ENCODE measurements at regions of chr7 and their contacts with region 1.

Region 1: GRCh38 chr7:41940760-41941343 is 238.0 kb upstream of the INHBA start:
- DNase-seq: peak; percentile 79
- H3K4me3 Mint-ChIP-seq: no peak overlapping the region
- H3K27ac Mint-ChIP-seq: no peak overlapping the region
- H3K4me1 Mint-ChIP-seq: peaks cover 16% of the 10 kb centered on the region
- H3K27me3 Mint-ChIP-seq: peaks cover 91% of the 10 kb centered on the region
- CTCF ChIP-seq: peak; percentile 94

Region 2: GRCh38 chr7:40232242-40232893 is 1708.5 kb before region 1 on chr7:
- CTCF ChIA-PET with region 1: no interaction called
- intact Hi-C with region 1: loop called (anchors 10 kb)
- DNase-seq: peak; percentile 57
- H3K4me3 Mint-ChIP-seq: no peak overlapping the region
- H3K27ac Mint-ChIP-seq: no peak overlapping the region
- H3K4me1 Mint-ChIP-seq: peaks cover 9% of the 10 kb centered on the region
- H3K27me3 Mint-ChIP-seq: no peaks in the 10 kb centered on the region
- CTCF ChIP-seq: peak; percentile 62

Region 3: DNA sequence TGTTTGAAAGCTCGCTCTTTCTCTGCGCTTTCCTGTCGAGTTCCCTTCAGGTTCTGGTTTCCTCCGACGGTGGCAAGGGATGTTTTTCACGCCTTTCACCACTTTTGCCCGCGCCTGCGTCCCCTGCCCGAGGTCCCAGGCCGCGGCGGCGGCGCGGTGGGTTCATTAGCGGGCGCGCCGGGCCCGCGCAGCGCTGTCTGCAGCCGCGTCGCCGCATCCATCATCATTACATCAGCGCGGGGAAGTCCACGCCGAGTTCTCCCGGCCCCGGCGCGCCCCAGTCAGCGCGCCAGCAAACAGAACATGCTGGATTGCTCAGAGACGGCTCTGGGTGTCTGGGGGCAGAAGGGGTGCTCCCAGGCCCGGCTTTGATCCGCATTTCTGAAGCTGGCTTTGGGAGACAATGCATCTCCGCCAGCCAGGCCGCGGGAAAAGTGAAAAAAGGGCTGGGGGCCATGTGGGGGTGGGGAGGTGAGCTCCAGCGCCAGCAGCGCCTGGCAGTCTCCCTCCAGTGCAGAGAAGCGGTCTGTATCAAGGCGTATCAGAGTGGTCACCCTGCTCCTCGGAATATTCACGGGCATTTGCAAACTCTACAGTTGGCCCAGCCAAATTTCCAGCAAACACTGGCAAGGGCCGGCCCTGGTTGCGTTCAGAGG is 287.2 kb after region 1 on chr7:
- CTCF ChIA-PET with region 1: no interaction called
- intact Hi-C with region 1: no loop called
- DNase-seq: no peak
- H3K4me3 Mint-ChIP-seq: no peak overlapping the region
- H3K27ac Mint-ChIP-seq: no peak overlapping the region
- H3K4me1 Mint-ChIP-seq: no peaks in the 10 kb centered on the region
- H3K27me3 Mint-ChIP-seq: peaks cover 80% of the 10 kb centered on the region
- CTCF ChIP-seq: no peak

Region 4: DNA sequence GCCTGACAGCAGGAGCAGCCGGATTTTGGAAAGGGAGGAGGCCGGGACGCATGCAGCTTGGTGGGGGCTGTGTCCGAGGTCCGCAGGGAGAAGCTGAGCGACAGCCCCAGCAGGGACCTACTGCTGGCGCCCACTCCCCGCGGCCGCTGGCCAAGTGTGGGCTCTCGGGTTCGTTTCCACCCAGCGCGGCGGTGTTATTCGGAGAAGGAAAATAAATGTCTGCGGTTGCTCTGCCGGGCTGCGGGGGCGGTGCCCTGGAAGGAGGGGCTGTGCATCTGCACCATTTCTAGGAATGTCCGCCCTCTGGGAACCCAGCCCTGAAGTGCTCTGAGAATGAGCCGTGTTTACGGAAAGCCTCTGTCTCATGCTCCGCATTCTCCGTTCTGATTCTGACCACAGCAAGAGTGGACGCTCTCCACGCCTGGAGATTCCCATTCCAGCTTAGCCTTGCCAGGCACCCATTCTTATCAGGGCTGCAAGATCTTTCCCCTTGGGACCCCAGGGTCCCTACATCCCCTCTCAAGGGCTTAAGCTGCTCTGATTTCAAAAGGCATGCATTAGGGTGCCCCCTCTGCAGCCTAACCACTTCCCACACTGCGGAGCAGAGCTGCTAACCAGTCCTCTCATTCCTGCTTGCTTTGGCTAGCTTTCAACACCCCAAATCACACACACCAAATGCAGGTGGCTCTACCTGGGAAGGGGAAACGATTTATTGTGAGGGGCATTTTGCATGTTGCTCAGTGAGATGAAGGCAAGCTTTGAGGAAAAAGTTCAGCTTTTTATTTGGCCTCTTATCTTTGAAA is 552.8 kb after region 1 on chr7:
- CTCF ChIA-PET with region 1: no interaction called
- intact Hi-C with region 1: no loop called
- DNase-seq: no peak
- H3K4me3 Mint-ChIP-seq: no peak overlapping the region
- H3K27ac Mint-ChIP-seq: no peak overlapping the region
- H3K4me1 Mint-ChIP-seq: no peaks in the 10 kb centered on the region
- H3K27me3 Mint-ChIP-seq: no peaks in the 10 kb centered on the region
- CTCF ChIP-seq: no peak

Region 5: GRCh38 chr7:42831718-42832431 is 891.0 kb after region 1 on chr7:
- CTCF ChIA-PET with region 1: interaction called, 7 read pairs
- intact Hi-C with region 1: loop called (anchors 1 kb)
- DNase-seq: peak; percentile 40
- H3K4me3 Mint-ChIP-seq: no peak overlapping the region
- H3K27ac Mint-ChIP-seq: no peak overlapping the region
- H3K4me1 Mint-ChIP-seq: no peaks in the 10 kb centered on the region
- H3K27me3 Mint-ChIP-seq: peaks cover 65% of the 10 kb centered on the region
- CTCF ChIP-seq: no peak

Region 6: GRCh38 chr7:42843205-42843800 is 902.5 kb after region 1 on chr7:
- CTCF ChIA-PET with region 1: interaction called, 12 read pairs
- intact Hi-C with region 1: no loop called
- DNase-seq: peak; percentile 56
- H3K4me3 Mint-ChIP-seq: no peak overlapping the region
- H3K27ac Mint-ChIP-seq: no peak overlapping the region
- H3K4me1 Mint-ChIP-seq: no peaks in the 10 kb centered on the region
- H3K27me3 Mint-ChIP-seq: peaks cover 81% of the 10 kb centered on the region
- CTCF ChIP-seq: peak; percentile 53

Region 7: GRCh38 chr7:42876182-42877068 is 935.6 kb after region 1 on chr7:
- CTCF ChIA-PET with region 1: interaction called, 10 read pairs
- intact Hi-C with region 1: loop called (anchors 1 kb)
- DNase-seq: peak; percentile 83
- H3K4me3 Mint-ChIP-seq: no peak overlapping the region
- H3K27ac Mint-ChIP-seq: no peak overlapping the region
- H3K4me1 Mint-ChIP-seq: no peaks in the 10 kb centered on the region
- H3K27me3 Mint-ChIP-seq: no peaks in the 10 kb centered on the region
- CTCF ChIP-seq: peak; percentile 74

Measured in Calu3 (cell line).